ENCODE measurements at regions of chr10 and their contacts with region 1.

Region 1: GRCh38 chr10:48981310-48981907 is 41.8 kb upstream of the LRRC18 start:
- DNase-seq: peak; percentile 15
- ATAC-seq: peak; percentile 92
- H3K4me3 ChIP-seq: no peak overlapping the region
- H3K27ac ChIP-seq: no peak overlapping the region
- H3K4me1 ChIP-seq: no peaks in the 10 kb centered on the region
- H3K27me3 ChIP-seq: no peaks in the 10 kb centered on the region
- CTCF ChIP-seq: peak; percentile 97

Region 2: GRCh38 chr10:49164559-49165188 is 183.3 kb after region 1 on chr10:
- CTCF ChIA-PET with region 1: interaction called, 3 read pairs
- POLR2A ChIA-PET with region 1: no interaction called
- in situ Hi-C with region 1: no loop called
- intact Hi-C with region 1: loop called (anchors 5 kb)
- DNase-seq: peak; percentile 7
- ATAC-seq: peak; percentile 85
- H3K4me3 ChIP-seq: no peak overlapping the region
- H3K27ac ChIP-seq: no peak overlapping the region
- H3K4me1 ChIP-seq: no peaks in the 10 kb centered on the region
- H3K27me3 ChIP-seq: no peaks in the 10 kb centered on the region; the same call in 1 of the 2 replicates
- CTCF ChIP-seq: peak; percentile 85; the same call in 1 of the 2 replicates

Region 3: DNA sequence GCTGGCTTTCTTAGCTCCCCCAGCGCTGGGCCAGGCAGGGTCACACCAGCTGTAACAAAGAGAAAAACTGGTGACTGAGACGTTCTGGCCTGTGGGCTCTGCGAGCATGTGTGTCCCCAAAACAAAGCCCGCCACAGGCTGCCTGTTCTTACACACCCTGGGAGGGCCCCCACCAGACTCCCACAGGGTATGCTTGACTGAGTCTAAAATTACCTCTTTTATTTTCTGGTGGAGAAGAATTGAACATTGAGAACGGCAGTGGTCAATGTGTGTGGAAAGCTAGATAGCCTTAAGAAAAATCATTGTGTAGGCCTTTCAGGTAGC is 318.4 kb after region 1 on chr10:
- CTCF ChIA-PET with region 1: no interaction called
- POLR2A ChIA-PET with region 1: no interaction called
- in situ Hi-C with region 1: no loop called
- intact Hi-C with region 1: loop called (anchors 10 kb)
- DNase-seq: no peak
- ATAC-seq: no peak
- H3K4me3 ChIP-seq: no peak overlapping the region
- H3K27ac ChIP-seq: no peak overlapping the region
- H3K4me1 ChIP-seq: no peaks in the 10 kb centered on the region
- H3K27me3 ChIP-seq: no peaks in the 10 kb centered on the region; the same call in 1 of the 2 replicates
- CTCF ChIP-seq: no peak

Region 4: GRCh38 chr10:49398000-49398861 is 416.8 kb after region 1 on chr10:
- CTCF ChIA-PET with region 1: no interaction called
- POLR2A ChIA-PET with region 1: no interaction called
- in situ Hi-C with region 1: no loop called
- intact Hi-C with region 1: loop called (anchors 10 kb)
- DNase-seq: no peak
- ATAC-seq: no peak
- H3K4me3 ChIP-seq: peak overlapping the region; percentile 19 to 21
- H3K27ac ChIP-seq: no peak overlapping the region
- H3K4me1 ChIP-seq: no peaks in the 10 kb centered on the region; the same call in 1 of the 2 replicates
- H3K27me3 ChIP-seq: peaks cover 47% of the 10 kb centered on the region
- CTCF ChIP-seq: no peak

Region 5: GRCh38 chr10:49512121-49512809 is 530.9 kb after region 1 on chr10:
- CTCF ChIA-PET with region 1: no interaction called
- POLR2A ChIA-PET with region 1: no interaction called
- in situ Hi-C with region 1: no loop called
- intact Hi-C with region 1: loop called (anchors 5 kb)
- DNase-seq: peak; percentile 24
- ATAC-seq: peak; percentile 85
- H3K4me3 ChIP-seq: no peak overlapping the region
- H3K27ac ChIP-seq: no peak overlapping the region
- H3K4me1 ChIP-seq: no peaks in the 10 kb centered on the region
- H3K27me3 ChIP-seq: no peaks in the 10 kb centered on the region
- CTCF ChIP-seq: peak; percentile 82

Measured in Panc1 (cell line).